Common myeloid progenitor, CD34-positive (primary cell): ENCODE measurements at regions of chr1 and their contacts with region 1.

Region 1: GRCh38 chr1:24391882-24392603 is 21.5 kb downstream of the STPG1 start:
- DNase-seq: peak; percentile 53 to 67 (median 67)
- H3K4me3 ChIP-seq: peak overlapping the region in 1 of 7 experiments; percentile 11
- H3K27ac ChIP-seq: no peak overlapping the region
- H3K4me1 ChIP-seq: peaks cover 0 to 9% (median 2%) of the 10 kb centered on the region in 4 experiments
- H3K27me3 ChIP-seq: no peaks in the 10 kb centered on the region

Region 2: GRCh38 chr1:24150234-24151174 is 241.5 kb before region 1 on chr1:
- CTCF ChIA-PET with region 1: interaction called, 35 read pairs
- POLR2A ChIA-PET with region 1: interaction called, 3 read pairs
- DNase-seq: peak; percentile 75 to 86 (median 83)
- H3K4me3 ChIP-seq: peak overlapping the region in 4 of 7 experiments; percentile 8 to 59 (median 18)
- H3K27ac ChIP-seq: no peak overlapping the region
- H3K4me1 ChIP-seq: peaks cover 0 to 12% (median 5%) of the 10 kb centered on the region in 4 experiments
- H3K27me3 ChIP-seq: peaks cover 2 to 40% (median 23%) of the 10 kb centered on the region in 5 experiments

Region 3: DNA sequence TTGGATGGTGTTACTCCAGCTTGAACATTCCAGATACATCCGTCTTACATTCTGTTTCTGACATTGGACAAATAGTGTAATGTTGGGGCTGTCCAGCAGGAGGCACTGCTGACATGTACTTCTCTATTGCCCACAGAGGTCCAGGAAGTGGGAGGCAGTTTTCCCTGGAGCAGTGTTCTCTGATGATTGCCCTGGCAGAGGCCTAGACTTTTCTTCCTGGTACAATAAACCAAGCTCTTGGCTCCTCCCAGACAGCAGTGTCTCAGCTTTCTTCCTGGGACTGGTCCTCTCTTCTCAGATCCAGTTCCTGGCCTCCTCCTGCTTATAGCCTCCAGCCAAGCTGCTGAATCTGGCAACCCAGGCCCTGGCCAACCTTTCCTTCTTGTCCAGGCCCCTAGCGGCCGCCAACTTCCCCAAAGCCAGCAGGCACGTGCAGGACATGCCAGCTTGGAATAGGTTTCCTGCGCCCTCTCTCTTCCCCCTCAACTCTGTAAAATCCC is 190.1 kb before region 1 on chr1:
- CTCF ChIA-PET with region 1: interaction called, 244 read pairs
- POLR2A ChIA-PET with region 1: interaction called, 3 read pairs
- DNase-seq: peak; percentile 37 to 55 (median 43)
- H3K4me3 ChIP-seq: no peak overlapping the region
- H3K27ac ChIP-seq: no peak overlapping the region
- H3K4me1 ChIP-seq: peaks cover 0 to 3% (median 0%) of the 10 kb centered on the region in 4 experiments
- H3K27me3 ChIP-seq: peaks cover 0 to 4% (median 0%) of the 10 kb centered on the region in 5 experiments

Region 4: DNA sequence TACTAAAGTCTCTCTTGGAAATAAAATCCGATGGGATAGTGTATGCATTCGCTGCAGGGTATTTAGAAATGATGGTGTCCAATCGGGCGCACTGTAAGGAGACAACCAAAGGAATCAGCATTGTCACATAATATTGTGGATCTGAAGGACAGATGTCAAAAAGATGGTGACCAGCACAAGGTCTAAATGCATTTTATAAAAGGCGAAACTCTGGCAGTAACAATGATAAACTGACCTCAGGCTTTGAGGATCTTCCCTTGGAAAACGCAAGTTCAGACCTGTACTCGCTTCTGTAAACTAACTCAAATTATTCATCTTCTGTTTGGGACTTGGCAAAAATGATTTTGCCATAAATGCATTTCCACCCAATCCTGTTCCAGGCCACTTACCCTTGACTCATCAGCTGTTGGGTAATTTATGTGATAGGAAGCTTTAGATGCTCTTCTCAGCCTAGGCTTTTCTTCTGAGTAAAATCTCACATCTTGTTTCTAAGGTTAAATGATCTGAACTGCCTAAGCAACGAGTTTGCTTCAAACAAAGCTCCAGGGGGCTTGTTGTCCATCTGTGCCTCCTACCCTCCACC is 12.2 kb before region 1 on chr1:
- CTCF ChIA-PET with region 1: interaction called, 24 read pairs
- POLR2A ChIA-PET with region 1: no interaction called
- DNase-seq: no peak
- H3K4me3 ChIP-seq: no peak overlapping the region
- H3K27ac ChIP-seq: no peak overlapping the region
- H3K4me1 ChIP-seq: no peaks in the 10 kb centered on the region
- H3K27me3 ChIP-seq: no peaks in the 10 kb centered on the region

Region 5: DNA sequence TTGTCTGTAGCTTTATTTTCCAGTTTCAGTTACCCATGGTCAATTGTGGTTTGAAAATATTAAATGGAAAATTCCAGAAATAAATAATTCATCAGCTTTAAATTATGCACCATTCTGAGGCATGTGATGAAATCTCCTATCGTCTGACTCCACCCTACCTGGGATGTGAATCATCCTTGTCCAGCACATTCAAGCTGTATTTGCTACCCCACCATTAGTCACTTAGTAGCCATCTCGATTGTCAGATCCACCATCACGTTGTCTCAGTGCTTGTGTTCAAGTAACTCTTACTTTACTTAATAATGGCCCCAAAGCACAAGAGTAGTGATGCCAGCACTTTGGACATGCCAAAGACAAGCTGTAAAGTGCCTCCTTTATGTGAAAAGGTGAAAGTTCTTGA is 17.5 kb after region 1 on chr1:
- CTCF ChIA-PET with region 1: interaction called, 16 read pairs
- POLR2A ChIA-PET with region 1: no interaction called
- DNase-seq: no peak
- H3K4me3 ChIP-seq: no peak overlapping the region
- H3K27ac ChIP-seq: no peak overlapping the region
- H3K4me1 ChIP-seq: peaks cover 2 to 13% (median 3%) of the 10 kb centered on the region in 4 experiments
- H3K27me3 ChIP-seq: no peaks in the 10 kb centered on the region